ENCODE measurements at regions of chr1 and their contacts with region 1.

Region 1: GRCh38 chr1:47201179-47201578 is 11.3 kb upstream of the PDZK1IP1 start:
- DNase-seq: peak; percentile 42

Region 2: GRCh38 chr1:47599777-47600176 is 398.6 kb after region 1 on chr1:
- intact Hi-C with region 1: loop called in 1 of 2 experiments (anchors 5 kb)
- DNase-seq: no peak

Measured in posterior vena cava (tissue), 2 donors.